WTC11 (cell line): ENCODE measurements at regions of chr1 and their contacts with region 1.

Region 1: GRCh38 chr1:36285448-36286101 is 20.6 kb upstream of the SH3D21 start:
- DNase-seq: peak; percentile 44
- ATAC-seq: peak; percentile 71
- H3K4me3 Mint-ChIP-seq: no peak overlapping the region
- H3K27ac Mint-ChIP-seq: peak overlapping the region; percentile 57; the same call in 1 of the 2 replicates
- H3K4me1 Mint-ChIP-seq: no peaks in the 10 kb centered on the region
- H3K27me3 Mint-ChIP-seq: no peaks in the 10 kb centered on the region
- CTCF ChIP-seq: peak; percentile 55

Region 2: DNA sequence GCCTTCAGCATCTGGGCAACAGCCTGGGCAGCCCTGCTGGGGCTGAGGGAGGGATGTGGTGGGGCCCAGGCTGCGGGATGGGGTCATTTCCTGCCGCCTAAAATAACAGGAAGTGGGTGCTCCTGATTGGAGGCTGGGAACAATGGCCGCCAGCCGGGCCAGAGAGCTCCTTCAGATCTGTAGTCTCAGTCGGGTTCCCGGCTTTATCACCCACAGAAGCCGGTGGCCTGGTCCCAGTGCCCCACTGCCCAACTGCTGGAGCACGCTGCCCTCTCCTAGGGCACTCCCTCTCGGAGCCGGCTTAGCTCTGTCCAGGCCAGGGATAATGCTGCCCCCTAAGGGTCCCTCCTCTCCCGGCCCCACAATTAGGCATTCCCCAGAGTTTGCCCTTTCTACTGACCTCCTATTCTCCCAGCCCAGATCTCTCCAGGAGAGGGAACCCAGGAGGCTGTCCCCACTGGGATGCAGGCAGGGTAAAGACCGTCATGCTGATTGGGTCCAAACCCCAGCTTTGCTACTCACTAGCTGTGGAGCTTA is 124.6 kb before region 1 on chr1:
- CTCF ChIA-PET with region 1: interaction called, 11 read pairs
- POLR2A ChIA-PET with region 1: no interaction called
- DNase-seq: peak; percentile 71
- ATAC-seq: peak; percentile 76
- H3K4me3 Mint-ChIP-seq: peak overlapping the region; percentile 67
- H3K27ac Mint-ChIP-seq: peak overlapping the region; percentile 88
- H3K4me1 Mint-ChIP-seq: peaks cover 41% of the 10 kb centered on the region
- H3K27me3 Mint-ChIP-seq: no peaks in the 10 kb centered on the region
- CTCF ChIP-seq: no peak

Region 3: DNA sequence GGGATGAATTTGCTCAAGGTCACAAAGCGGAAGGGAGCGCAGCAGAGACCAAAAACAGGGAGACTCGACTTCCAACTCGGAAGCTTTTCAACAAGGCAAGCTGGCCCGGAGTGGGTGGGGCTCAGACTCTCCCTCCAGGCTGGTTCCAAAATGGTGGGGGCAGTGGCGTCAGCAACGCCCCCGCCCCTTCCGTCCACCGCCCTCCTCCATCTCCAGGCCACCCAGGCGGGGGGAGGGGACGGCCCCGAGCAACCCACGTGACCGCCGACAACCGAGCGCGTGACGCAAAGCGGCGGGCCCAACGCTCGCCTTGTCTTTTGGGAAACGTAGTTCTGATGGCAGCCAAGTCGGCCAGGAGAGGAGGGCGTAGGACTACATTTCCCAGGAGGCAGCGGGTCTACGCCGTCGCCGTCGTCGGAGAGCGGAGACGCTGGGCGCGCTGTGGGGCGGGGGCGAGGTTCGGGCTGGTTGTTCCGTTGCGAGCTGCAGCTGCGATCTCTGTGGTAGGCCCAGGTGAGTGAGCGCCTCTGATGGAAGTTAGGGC is 61.5 kb before region 1 on chr1 and contains the start of gene THRAP3:
- CTCF ChIA-PET with region 1: interaction called, 16 read pairs
- POLR2A ChIA-PET with region 1: no interaction called
- DNase-seq: peak; percentile 100
- ATAC-seq: peak; percentile 95
- H3K4me3 Mint-ChIP-seq: peak within 1 kb of the TSS; percentile 97
- H3K27ac Mint-ChIP-seq: peak within 1 kb of the TSS; percentile 100
- H3K4me1 Mint-ChIP-seq: peaks cover 16% of the 10 kb centered on the region
- H3K27me3 Mint-ChIP-seq: no peaks in the 10 kb centered on the region
- CTCF ChIP-seq: no peak
- total RNA-seq, gene THRAP3: 150 to 160 TPM (median 153 TPM) in 3 replicates

Region 4: DNA sequence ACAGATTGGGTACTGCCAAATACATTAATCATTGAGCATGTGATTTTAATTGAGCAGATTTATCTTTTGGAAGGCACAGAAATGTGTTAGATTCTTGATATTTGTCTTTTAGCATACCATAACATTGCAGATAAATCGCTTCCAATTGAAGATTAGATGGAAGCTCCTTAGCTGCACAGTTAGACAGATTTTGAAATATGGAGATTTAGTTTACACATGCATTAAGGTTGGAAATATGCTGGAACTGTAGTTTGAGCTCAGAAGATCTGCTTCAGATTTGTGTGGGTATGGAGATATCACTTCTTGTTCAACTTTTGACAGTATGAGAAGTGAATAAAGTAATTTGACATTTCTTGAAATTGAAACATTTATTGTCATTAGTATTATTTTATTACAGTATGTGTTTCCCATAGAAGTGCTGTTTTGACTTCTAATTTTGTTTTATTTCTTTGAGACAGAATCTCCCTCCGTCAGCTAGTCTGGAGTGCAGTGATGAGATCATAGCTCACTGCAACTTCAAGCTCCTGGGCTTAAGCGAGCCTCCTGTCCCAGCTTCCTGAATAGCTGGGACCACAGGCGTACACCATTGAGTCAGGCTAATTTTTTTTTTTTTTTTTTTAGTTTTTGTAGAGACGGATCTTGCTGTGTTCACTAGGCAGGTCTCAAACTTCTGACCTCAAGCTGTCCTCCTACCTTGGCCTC is 32.3 kb before region 1 on chr1:
- CTCF ChIA-PET with region 1: interaction called, 12 read pairs
- POLR2A ChIA-PET with region 1: no interaction called
- DNase-seq: no peak
- ATAC-seq: no peak
- H3K4me3 Mint-ChIP-seq: no peak overlapping the region
- H3K27ac Mint-ChIP-seq: peak overlapping the region; percentile 72; the same call in 1 of the 2 replicates
- H3K4me1 Mint-ChIP-seq: peaks cover 36% of the 10 kb centered on the region
- H3K27me3 Mint-ChIP-seq: no peaks in the 10 kb centered on the region
- CTCF ChIP-seq: no peak

Region 5: DNA sequence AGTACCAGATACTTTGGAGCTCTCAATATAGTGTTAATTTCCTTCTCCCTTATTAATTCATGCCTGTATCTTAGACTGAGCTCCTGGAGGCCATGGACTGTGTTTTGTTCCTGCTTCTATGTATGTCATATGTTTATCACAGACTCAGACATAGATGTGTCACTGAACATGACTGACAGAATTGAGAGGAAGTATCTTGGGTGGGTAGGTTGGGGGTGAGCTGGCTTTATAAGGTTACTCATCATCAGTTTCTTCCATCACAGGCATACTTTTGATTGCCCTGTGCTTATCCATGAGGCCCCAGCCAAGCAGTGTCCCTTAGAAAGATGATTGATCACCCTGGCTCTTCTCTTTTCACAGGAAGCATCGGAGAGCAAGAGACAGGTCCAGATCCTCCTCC is 15.0 kb after region 1 on chr1:
- CTCF ChIA-PET with region 1: interaction called, 17 read pairs
- POLR2A ChIA-PET with region 1: no interaction called
- DNase-seq: no peak
- ATAC-seq: no peak
- H3K4me3 Mint-ChIP-seq: no peak overlapping the region
- H3K27ac Mint-ChIP-seq: peak overlapping the region; percentile 12; the same call in 1 of the 2 replicates
- H3K4me1 Mint-ChIP-seq: peaks cover 5% of the 10 kb centered on the region
- H3K27me3 Mint-ChIP-seq: no peaks in the 10 kb centered on the region
- CTCF ChIP-seq: no peak

Region 6: DNA sequence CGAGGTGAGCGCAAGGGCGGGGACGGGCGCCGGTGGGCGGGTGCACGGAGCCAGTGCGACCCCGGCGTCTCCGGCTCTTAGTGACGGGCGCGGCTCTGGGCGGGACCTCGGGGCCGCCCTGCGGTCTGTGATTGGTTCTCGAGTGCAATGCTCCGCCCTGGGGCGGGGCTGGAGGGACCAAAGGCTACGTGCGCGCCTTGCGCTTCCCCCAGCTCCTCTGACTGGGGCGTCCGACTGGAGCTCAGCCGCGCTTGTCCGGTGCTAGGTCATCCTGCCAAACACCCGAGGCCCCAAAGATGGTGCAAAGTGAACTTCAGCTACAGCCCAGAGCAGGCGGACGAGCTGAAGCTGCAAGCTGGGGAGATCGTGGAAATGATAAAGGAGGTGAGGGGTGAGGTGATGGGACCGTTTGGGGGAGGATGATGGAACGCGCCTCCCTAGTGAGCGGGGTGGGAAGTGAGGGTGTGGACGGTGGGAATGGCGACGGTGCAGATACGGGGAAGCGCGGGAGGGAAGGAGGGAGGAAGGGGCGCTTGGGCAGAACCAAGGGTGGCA is 21.4 kb after region 1 on chr1:
- CTCF ChIA-PET with region 1: interaction called, 17 read pairs
- POLR2A ChIA-PET with region 1: no interaction called
- DNase-seq: peak; percentile 98
- ATAC-seq: peak; percentile 95
- H3K4me3 Mint-ChIP-seq: peak overlapping the region; percentile 99
- H3K27ac Mint-ChIP-seq: peak overlapping the region; percentile 94; the same call in 1 of the 2 replicates
- H3K4me1 Mint-ChIP-seq: peaks cover 17% of the 10 kb centered on the region
- H3K27me3 Mint-ChIP-seq: no peaks in the 10 kb centered on the region
- CTCF ChIP-seq: no peak

Region 7: DNA sequence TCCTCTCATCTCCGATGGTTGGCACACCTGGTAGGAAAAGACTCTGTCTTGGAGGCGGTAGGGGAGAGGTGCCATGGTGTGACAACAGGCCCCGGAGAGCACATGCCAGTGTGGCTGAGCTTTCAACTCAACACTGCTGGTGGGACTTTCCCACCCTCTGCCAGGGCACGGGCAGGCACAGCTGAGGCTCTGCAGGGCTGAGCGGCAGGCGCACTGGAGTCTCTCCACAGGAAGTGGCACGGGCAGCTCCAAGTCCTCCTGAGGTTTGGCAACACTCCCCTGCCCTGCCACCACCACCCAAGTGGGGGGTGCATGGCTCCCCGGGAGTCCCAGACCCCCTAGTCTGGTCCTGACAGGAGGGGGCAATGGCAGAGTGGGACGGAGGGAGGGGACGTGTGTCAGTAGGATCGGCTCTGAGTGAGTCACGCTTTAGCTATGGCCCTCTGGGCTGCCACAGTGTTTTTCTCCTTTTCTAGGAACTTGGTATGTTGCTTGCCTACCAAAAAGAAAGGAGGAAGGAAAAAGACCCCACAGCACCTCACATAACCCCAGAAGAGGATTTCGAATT is 65.2 kb after region 1 on chr1:
- CTCF ChIA-PET with region 1: no interaction called
- POLR2A ChIA-PET with region 1: no interaction called
- DNase-seq: no peak
- ATAC-seq: no peak
- H3K4me3 Mint-ChIP-seq: no peak overlapping the region
- H3K27ac Mint-ChIP-seq: peak overlapping the region; percentile 30; the same call in 1 of the 2 replicates
- H3K4me1 Mint-ChIP-seq: peaks cover 8% of the 10 kb centered on the region
- H3K27me3 Mint-ChIP-seq: no peaks in the 10 kb centered on the region
- CTCF ChIP-seq: no peak

Region 8: DNA sequence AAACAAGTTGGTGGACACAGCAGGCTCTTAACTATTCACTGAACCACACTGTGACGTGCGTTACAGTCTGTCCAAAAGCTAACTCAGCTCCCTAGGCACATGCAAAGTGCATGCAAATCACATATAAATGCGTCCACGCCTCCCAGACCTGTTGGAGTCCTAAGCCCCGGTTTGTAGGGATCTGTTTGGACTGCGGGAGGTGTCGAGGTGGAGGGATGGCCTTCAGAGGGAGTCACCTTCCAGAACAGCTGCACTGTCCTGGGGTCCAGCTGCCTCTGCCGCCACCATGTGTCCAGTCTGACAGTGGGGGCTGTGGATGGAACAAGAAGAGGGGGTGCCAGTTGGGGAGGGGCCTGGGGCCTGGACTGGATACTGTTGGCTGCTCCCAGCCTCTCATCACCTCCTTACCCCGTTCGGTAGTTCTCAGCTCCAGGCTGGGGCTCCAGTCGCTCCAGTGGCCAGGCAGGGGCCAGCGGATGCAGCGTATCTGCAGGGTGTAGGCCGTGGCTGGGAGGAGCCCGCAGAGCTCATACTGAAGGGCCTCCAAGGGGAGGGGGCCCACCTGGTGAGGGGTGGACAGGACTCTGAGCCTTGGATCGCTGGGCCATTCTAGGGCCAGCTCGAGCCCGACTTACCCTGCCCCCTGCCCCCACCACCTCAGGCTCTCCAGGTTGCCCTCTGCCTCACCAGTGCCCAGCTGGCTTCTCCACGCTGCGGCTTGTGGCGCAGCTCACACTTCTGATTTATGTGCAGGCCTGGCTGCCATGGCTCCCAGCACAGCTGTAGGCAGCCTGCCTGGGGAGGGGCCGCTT is 186.5 kb after region 1 on chr1:
- CTCF ChIA-PET with region 1: no interaction called
- POLR2A ChIA-PET with region 1: no interaction called
- DNase-seq: no peak
- ATAC-seq: peak; percentile 52
- H3K4me3 Mint-ChIP-seq: no peak overlapping the region
- H3K27ac Mint-ChIP-seq: no peak overlapping the region
- H3K4me1 Mint-ChIP-seq: no peaks in the 10 kb centered on the region; the same call in 1 of the 2 replicates
- H3K27me3 Mint-ChIP-seq: peaks cover 44% of the 10 kb centered on the region
- CTCF ChIP-seq: no peak